ENCODE measurements at regions of chr3 and their contacts with region 1.

Region 1: GRCh38 chr3:120417272-120417911 is 33.4 kb downstream of the FSTL1 start:
- DNase-seq: peak; percentile 95
- H3K4me3 ChIP-seq: peak overlapping the region; percentile 15 to 45 (median 39)
- H3K27ac ChIP-seq: peak overlapping the region; percentile 65
- H3K4me1 ChIP-seq: peaks cover 23% of the 10 kb centered on the region
- H3K27me3 ChIP-seq: no peaks in the 10 kb centered on the region
- CTCF ChIP-seq: peak; percentile 83 to 85

Region 2: GRCh38 chr3:120245386-120245785 is 172.0 kb before region 1 on chr3:
- CTCF ChIA-PET with region 1: interaction called, 8 read pairs
- dilution Hi-C with region 1: no loop called
- in situ Hi-C with region 1: loop called in 1 of 2 experiments (anchors 5 kb)
- intact Hi-C with region 1: loop called (anchors 1 kb)
- DNase-seq: no peak
- H3K4me3 ChIP-seq: no peak overlapping the region
- H3K27ac ChIP-seq: no peak overlapping the region
- H3K4me1 ChIP-seq: no peaks in the 10 kb centered on the region
- H3K27me3 ChIP-seq: no peaks in the 10 kb centered on the region
- CTCF ChIP-seq: no peak

Region 3: DNA sequence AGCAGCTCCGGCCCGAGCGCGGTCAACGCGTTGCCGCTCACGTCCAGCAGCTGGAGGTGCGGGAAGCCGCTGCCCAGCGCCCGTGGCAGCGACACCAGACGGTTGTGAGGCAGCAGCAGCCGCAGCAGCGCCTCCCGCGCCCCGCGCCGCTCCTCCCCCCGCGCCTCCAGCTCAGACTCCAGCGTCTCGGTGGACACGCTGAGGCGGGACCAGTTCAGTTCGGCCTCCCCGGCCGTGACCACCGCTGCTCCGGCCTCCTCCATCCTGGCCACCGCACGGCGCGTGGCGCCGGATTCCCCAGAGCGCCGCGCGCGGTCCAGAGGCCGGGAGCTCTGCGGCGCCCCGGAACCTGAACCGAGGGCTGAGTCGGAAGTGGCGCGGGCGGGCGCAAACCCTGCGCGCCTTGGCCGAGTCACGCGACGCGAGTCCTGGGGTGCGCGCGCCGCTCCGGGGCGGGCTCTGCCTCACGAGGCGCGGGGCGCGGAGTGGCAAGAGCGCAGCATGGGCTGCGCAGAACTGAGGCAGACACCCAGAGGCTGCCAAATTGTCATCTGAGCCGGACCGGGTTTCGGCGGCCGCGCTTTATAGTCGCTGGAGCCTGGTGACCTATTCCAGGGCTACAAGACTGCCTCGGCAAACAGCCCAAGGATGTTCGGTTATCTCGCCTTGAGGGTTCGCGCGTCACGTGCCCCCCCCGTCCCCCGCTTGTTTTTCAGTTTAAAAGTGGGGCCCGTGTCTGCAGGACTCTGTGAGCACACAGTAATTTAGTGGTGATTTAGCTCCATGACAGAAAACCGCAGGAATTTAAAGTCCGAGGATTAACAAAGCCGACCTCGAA is 68.2 kb before region 1 on chr3 and contains the start of gene LRRC58:
- CTCF ChIA-PET with region 1: interaction called, 8 read pairs
- dilution Hi-C with region 1: no loop called
- in situ Hi-C with region 1: no loop called
- intact Hi-C with region 1: loop called (anchors 1 kb)
- DNase-seq: peak; percentile 95
- H3K4me3 ChIP-seq: peak within 1 kb of the TSS; percentile 85 to 95 (median 85)
- H3K27ac ChIP-seq: peak within 1 kb of the TSS; percentile 76
- H3K4me1 ChIP-seq: peaks cover 8% of the 10 kb centered on the region
- H3K27me3 ChIP-seq: no peaks in the 10 kb centered on the region
- CTCF ChIP-seq: peak in 1 of 2 donors; percentile 40
- total RNA-seq, gene LRRC58: 21.3 to 28.2 TPM

Region 4: DNA sequence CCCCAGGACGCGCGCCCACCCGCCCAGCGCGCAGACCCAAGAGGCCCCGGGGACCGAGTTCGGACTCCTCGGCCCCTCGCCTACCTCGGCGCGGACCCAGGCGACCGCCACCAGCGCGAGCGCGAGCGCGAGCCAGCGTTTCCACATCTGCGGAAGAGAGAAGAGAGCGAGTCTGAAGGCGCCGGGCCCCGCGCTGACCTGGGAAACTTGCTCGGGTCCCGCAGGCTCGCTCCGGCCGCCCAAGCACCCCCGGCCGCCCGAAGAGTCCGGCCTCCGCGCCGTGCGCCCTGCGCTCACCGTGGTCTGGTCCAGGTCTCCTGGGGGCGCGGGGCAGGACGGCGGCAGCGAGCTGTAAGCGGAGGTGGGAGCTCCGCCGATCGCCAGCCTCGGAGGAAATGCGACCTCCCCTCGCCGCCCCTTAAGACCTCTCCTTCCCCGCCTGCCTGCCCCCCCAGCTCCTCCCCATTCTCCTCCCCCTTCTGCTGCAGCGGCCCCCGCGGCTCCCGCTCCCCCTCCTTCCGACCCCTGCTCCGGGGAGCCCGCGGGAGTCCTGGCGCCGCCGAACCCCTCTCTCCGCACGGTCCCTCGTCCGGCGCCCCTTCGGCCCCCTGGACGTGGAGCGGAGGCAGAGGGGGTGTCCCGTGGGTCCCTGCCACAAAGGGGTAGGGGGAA is 33.3 kb after region 1 on chr3 and contains the start of gene FSTL1:
- CTCF ChIA-PET with region 1: no interaction called
- dilution Hi-C with region 1: no loop called
- in situ Hi-C with region 1: no loop called
- intact Hi-C with region 1: loop called (anchors 1 kb)
- DNase-seq: peak; percentile 45
- H3K4me3 ChIP-seq: peak within 1 kb of the TSS; percentile 81 to 97 (median 81)
- H3K27ac ChIP-seq: peak within 1 kb of the TSS; percentile 63
- H3K4me1 ChIP-seq: peaks cover 19% of the 10 kb centered on the region
- H3K27me3 ChIP-seq: no peaks in the 10 kb centered on the region
- CTCF ChIP-seq: no peak
- total RNA-seq, gene FSTL1: 109 to 161 TPM

Region 5: DNA sequence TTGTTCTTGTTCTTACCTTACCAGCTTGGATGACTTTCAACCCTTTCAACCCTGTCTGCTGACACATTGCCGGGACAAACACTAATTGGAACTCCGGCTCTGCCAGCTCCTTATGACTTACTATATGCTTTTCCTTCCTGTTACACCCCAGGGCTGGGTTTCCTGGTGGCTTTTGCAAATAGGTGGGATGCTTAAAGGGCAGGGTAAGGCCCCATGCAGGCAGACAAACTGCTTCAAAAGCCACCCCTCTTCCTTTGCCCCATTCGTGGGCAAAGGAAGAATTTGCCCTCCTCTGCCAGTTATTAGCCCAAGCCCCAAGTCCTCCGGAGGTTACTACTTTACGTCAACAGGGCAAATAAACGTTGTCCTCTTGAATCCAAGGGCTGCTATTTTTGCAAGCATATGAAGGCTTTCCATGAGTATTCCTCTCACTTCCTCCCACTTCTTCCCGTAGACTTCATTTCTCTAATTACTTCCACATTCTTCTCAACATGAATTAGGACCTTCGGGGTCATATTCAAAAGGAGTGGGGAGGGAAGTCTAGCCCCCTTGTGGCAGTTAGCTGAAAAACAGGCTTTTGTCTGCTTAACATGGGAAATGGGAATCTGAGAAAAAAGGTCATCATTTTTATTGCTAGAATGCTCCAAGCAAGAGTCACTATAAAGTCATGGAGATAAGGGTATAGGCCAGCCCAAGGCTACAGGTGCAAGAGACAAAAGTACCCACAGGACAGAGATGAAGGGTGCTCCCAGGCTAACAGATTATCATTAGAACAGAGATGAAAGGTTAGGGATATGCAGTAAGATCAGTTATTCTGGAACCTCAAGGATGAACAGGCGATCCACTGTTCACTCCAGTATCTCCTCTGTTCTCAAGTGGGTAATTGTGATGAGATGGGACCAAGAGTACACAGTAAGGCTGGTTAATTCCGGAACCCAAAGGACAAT is 89.7 kb after region 1 on chr3:
- CTCF ChIA-PET with region 1: interaction called, 3 read pairs
- dilution Hi-C with region 1: no loop called
- in situ Hi-C with region 1: no loop called
- intact Hi-C with region 1: loop called (anchors 1 kb)
- DNase-seq: no peak
- H3K4me3 ChIP-seq: no peak overlapping the region
- H3K27ac ChIP-seq: no peak overlapping the region
- H3K4me1 ChIP-seq: no peaks in the 10 kb centered on the region
- H3K27me3 ChIP-seq: no peaks in the 10 kb centered on the region
- CTCF ChIP-seq: peak; percentile 67 to 80

Region 6: GRCh38 chr3:120544361-120544760 is 127.0 kb after region 1 on chr3:
- CTCF ChIA-PET with region 1: no interaction called
- dilution Hi-C with region 1: no loop called
- in situ Hi-C with region 1: loop called in 1 of 2 experiments (anchors 5 kb)
- intact Hi-C with region 1: no loop called
- DNase-seq: no peak
- H3K4me3 ChIP-seq: no peak overlapping the region
- H3K27ac ChIP-seq: no peak overlapping the region
- H3K4me1 ChIP-seq: no peaks in the 10 kb centered on the region
- H3K27me3 ChIP-seq: no peaks in the 10 kb centered on the region
- CTCF ChIP-seq: no peak

Region 7: DNA sequence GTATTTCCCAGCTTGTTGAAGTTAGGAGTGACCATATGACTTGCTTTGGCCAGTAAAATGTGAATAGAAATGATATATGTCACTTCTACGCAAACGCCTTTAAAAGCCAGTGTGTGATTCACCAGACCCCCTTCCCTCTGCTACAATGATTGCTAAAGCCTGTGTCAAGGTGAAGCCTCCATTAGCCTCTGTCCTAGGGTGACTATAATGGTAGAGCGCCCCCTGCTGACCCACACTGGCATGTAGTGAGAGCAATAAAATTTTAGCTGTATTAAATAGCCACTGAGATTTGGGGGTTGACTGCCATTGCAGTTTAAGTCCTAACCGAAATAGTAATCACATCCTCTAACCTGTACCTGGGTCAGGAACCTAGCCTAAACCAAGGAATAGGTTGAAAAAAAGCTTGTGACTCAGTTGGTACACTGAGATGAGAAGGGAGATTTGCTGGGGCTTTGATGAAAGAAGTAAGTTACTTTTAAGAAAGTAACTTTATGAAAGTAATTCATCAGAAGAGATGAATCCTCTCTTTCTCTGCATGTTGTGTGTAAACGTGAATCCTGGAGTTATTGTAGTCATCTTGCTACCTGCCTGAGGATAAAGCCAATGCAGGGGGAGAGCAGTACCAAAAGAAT is 377.7 kb after region 1 on chr3:
- CTCF ChIA-PET with region 1: interaction called, 3 read pairs
- dilution Hi-C with region 1: no loop called
- in situ Hi-C with region 1: loop called in 1 of 2 experiments (anchors 10 kb)
- intact Hi-C with region 1: loop called (anchors 1 kb)
- DNase-seq: peak; percentile 50
- H3K4me3 ChIP-seq: no peak overlapping the region
- H3K27ac ChIP-seq: no peak overlapping the region
- H3K4me1 ChIP-seq: peaks cover 5% of the 10 kb centered on the region
- H3K27me3 ChIP-seq: peaks cover 4% of the 10 kb centered on the region
- CTCF ChIP-seq: peak; percentile 87

Measured in mammary epithelial cell (primary cell).